Activated T-helper 1 cell treated with anti-CD3 and anti-CD28 coated beads, Interleukin-12 subunit alpha, Interleukin-12 subunit beta, Interleukin-2, Interleukin-4 antibody, amounts not matched to agents 30 ng/mL and 10 ng/mL and 1 ng/mL, durations not matched to agents 14 hours and 24 hours and 36 hours (primary cell): ENCODE measurements at regions of chr17 and their contacts with region 1.

Region 1: DNA sequence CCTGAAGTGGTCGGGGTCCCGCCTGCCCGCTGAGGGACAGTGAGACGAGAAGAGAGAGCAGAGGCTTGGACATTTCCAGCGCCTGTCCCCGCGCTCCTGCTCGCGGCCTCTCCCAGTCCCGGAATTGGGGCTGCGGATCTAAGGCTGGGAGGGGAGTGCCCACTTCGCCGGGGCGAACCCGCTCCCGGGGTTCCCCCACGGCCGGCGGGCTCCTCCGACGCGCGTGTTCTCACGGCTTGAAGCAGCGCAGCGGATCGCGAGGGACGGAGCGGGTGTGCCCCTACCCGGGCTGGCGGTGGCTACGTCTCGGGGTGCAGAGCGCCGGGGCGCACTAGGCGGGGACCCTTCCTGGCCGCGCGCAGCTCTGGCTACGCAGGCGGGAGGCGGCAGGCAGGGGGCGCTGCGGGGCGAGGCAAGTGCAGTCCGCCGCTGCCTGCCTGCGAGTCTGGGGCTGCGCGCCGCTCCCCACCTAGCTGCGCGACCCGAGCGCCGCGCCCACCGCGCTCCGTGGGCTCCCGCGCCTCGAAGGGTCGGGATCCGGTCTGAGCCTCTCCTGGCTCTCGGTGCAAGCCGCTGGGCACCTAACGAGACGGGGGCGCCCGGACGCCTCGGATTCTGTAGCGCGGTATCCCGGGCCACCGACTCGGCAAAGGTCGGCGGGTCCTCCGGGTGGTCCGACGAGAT is 1.2 kb downstream of the NGFR start:
- DNase-seq: peak; percentile 77
- H3K4me3 Mint-ChIP-seq: peak overlapping the region; percentile 66
- H3K27ac Mint-ChIP-seq: no peak overlapping the region
- H3K4me1 Mint-ChIP-seq: no peaks in the 10 kb centered on the region
- H3K27me3 Mint-ChIP-seq: peaks cover 75% of the 10 kb centered on the region

Region 2: DNA sequence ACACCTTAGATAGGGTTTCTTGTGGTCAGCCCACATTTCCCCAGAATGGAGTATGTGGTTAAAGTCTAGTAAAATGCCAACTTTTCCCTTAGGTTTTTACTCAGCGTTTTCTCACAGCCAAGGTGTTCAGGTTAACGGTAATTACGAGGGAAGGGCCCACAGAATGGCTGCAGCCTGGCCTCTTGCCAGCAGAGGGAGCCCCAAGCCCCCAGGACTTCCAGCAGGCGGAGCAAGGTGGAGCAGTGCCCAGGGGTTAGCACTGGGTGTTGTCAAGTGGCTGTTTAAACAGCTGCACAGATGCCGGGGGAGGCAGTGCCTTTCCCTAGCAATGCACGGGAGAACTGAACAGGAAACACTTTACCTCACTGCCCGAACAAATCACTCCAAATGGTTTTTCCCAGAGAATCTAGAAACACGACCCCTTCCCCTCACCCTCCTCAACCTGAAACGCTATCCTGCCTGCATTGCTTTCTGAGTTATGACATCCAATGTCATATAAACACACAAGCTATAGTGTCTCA is 88.3 kb before region 1 on chr17:
- intact Hi-C with region 1: loop called (anchors 5 kb)
- DNase-seq: peak; percentile 77
- H3K4me3 Mint-ChIP-seq: peak overlapping the region; percentile 3
- H3K27ac Mint-ChIP-seq: no peak overlapping the region
- H3K4me1 Mint-ChIP-seq: peaks cover 31% of the 10 kb centered on the region
- H3K27me3 Mint-ChIP-seq: no peaks in the 10 kb centered on the region

Region 3: DNA sequence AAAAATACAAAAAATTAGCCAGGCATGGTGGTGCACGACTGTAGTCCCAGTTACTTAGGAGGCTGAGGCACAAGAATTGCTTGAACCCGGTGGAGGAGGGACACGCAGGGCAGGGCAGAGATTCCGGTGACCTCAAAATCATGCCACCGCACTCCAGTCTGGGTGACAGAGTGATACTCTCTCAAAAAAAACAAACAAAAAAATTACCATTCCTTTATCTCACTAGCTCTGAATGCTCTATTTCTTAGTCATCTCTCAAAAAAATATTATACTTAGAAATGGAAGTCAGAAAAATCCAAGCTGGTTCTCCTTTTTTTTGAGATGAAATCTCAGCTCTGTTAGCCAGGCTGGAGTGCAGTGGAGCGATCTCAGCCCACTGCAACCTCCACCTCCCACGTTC is 140.7 kb after region 1 on chr17:
- intact Hi-C with region 1: no loop called
- DNase-seq: no peak
- H3K4me3 Mint-ChIP-seq: no peak overlapping the region
- H3K27ac Mint-ChIP-seq: no peak overlapping the region
- H3K4me1 Mint-ChIP-seq: no peaks in the 10 kb centered on the region
- H3K27me3 Mint-ChIP-seq: no peaks in the 10 kb centered on the region

Region 4: DNA sequence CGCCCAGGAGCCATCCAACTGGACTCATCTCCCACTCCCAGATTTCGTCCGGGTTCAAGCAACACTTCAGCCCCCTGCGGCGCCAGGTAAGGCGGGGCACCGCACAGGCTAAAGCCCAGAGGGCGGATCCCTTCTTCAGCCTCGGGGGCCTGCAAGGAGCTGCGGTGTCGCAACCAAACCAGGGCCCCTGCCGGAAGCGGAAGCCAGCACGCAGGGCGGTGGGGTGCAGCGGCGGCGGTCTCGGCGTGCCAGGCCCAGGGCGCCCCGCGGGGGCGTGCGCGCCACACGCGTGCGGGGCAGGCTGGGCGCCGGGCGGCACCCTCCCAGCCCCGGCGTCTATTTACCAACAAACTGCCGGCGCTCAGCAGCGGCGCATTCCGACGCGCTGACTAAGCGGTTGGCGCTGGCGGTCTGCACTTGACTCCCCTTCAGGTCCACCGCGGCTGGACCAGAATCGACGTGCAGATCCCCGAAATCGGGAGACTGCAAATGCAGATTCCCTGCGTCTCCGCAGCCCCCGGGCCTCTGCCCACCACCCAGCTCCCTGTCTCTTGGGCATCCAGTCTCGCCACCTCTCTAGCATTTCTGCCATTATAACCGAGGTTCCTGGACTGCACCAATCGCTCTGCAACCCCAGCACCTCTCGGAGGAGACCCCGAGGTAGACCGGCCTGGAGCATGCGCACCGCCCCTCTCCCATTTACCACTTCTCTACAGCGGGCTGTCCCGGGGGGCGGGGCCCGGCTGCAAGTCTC is 472.2 kb after region 1 on chr17:
- intact Hi-C with region 1: loop called (anchors 5 kb)
- DNase-seq: peak; percentile 47
- H3K4me3 Mint-ChIP-seq: peak overlapping the region; percentile 85
- H3K27ac Mint-ChIP-seq: peak overlapping the region; percentile 63
- H3K4me1 Mint-ChIP-seq: peaks cover 21% of the 10 kb centered on the region
- H3K27me3 Mint-ChIP-seq: peaks cover 90% of the 10 kb centered on the region